H1 (cell line): ENCODE measurements at regions of chr12 and their contacts with region 1.

Region 1: GRCh38 chr12:219891-220352 is 6.0 kb upstream of the SLC6A12 start:
- DNase-seq: peak; percentile 72 to 98
- H3K4me3 ChIP-seq: peak overlapping the region in 2 of 4 experiments; percentile 14 to 40; a peak in 2 of 8 replicates
- H3K27ac ChIP-seq: no peak overlapping the region
- H3K4me1 ChIP-seq: peaks cover 0 to 11% (median 9%) of the 10 kb centered on the region in 4 experiments; a peak in 6 of 7 replicates
- H3K27me3 ChIP-seq: peaks cover 0 to under 1% (median 0%) of the 10 kb centered on the region in 4 experiments; a peak in 1 of 7 replicates
- CTCF ChIP-seq: peak in 2 of 3 experiments; percentile 99; a peak in 3 of 4 replicates
- EP300 ChIP-seq: no peak
- POLR2A ChIP-seq: no peak
- RAD21 ChIP-seq: peak; percentile 90 to 94

Region 2: GRCh38 chr12:117816-118345 is 102.0 kb before region 1 on chr12:
- CTCF ChIA-PET with region 1: interaction called, 34 read pairs
- POLR2A ChIA-PET with region 1: no interaction called
- DNase-seq: no peak
- H3K4me3 ChIP-seq: no peak overlapping the region
- H3K27ac ChIP-seq: no peak overlapping the region
- H3K4me1 ChIP-seq: no peaks in the 10 kb centered on the region; a peak in 1 of 7 replicates
- H3K27me3 ChIP-seq: no peaks in the 10 kb centered on the region
- CTCF ChIP-seq: no peak
- EP300 ChIP-seq: no peak
- POLR2A ChIP-seq: no peak
- RAD21 ChIP-seq: no peak

Region 3: GRCh38 chr12:164207-164606 is 55.7 kb before region 1 on chr12:
- CTCF ChIA-PET with region 1: interaction called, 55 read pairs
- POLR2A ChIA-PET with region 1: no interaction called
- DNase-seq: no peak
- H3K4me3 ChIP-seq: no peak overlapping the region
- H3K27ac ChIP-seq: no peak overlapping the region
- H3K4me1 ChIP-seq: peaks cover 3 to 11% (median 7%) of the 10 kb centered on the region in 4 experiments
- H3K27me3 ChIP-seq: peaks cover 0 to 3% (median 1%) of the 10 kb centered on the region in 4 experiments; a peak in 1 of 7 replicates
- CTCF ChIP-seq: no peak
- EP300 ChIP-seq: no peak
- POLR2A ChIP-seq: no peak
- RAD21 ChIP-seq: no peak

Region 4: GRCh38 chr12:188910-189621 is 30.9 kb before region 1 on chr12:
- CTCF ChIA-PET with region 1: interaction called, 52 read pairs
- POLR2A ChIA-PET with region 1: interaction called, 3 read pairs
- DNase-seq: peak in 1 of 2 experiments; percentile 87
- H3K4me3 ChIP-seq: peak overlapping the region; percentile 42 to 73 (median 58)
- H3K27ac ChIP-seq: no peak overlapping the region
- H3K4me1 ChIP-seq: peaks cover 0 to 3% (median 2%) of the 10 kb centered on the region in 4 experiments; a peak in 2 of 7 replicates
- H3K27me3 ChIP-seq: peaks cover 0 to 15% (median 5%) of the 10 kb centered on the region in 4 experiments; a peak in 5 of 7 replicates
- CTCF ChIP-seq: peak; percentile 83 to 86 (median 84)
- EP300 ChIP-seq: no peak
- POLR2A ChIP-seq: no peak
- RAD21 ChIP-seq: peak; percentile 41 to 70; a peak in 3 of 4 replicates

Region 5: DNA sequence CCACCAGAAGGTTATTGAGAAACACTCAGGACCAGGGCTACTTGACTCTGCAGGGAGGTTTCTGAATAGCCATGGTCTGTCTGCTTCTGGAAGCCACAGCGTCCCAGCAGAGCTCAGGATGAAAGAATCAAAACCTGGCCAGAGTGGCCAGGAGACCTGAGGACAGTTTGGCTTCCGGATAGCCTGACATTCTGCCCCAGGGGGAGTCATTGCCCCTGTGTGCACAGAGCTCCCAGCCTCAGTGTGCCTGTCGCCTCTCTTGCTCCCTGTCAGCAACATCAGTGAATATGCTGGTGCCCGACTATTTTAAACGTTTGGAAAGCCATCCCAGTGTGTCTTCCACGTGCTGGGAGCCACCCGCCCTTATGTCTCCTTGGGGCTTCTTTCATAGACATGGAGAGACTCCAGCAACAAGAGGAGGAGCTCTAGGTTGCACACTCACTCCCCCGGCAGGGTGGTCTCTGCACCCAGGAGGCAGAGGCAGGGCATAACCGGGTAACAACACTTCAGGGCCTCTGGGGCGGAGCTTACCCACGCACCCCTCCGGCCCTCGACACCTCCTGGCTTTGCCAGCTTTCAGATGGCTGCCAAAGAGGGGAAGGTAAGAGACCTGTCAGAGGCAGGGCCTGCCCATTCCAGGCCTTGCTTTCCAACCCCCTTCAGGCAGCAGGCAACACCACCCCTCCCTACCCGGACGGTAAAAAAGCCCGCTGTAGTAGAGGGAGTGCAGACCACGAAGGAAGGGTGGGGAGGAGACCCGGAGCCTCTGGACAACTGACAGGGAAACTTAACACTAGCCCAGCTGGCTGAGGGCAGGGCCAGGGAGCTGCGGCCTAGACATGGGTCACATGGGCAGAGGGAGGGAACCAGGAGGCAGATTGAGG is 13.1 kb after region 1 on chr12:
- CTCF ChIA-PET with region 1: interaction called, 101 read pairs
- POLR2A ChIA-PET with region 1: no interaction called
- DNase-seq: no peak
- H3K4me3 ChIP-seq: no peak overlapping the region
- H3K27ac ChIP-seq: no peak overlapping the region
- H3K4me1 ChIP-seq: peaks cover 0 to 14% (median 5%) of the 10 kb centered on the region in 4 experiments; a peak in 5 of 7 replicates
- H3K27me3 ChIP-seq: peaks cover 0 to 2% (median 0%) of the 10 kb centered on the region in 4 experiments; a peak in 2 of 7 replicates
- CTCF ChIP-seq: no peak
- EP300 ChIP-seq: no peak
- POLR2A ChIP-seq: no peak
- RAD21 ChIP-seq: no peak

Region 6: DNA sequence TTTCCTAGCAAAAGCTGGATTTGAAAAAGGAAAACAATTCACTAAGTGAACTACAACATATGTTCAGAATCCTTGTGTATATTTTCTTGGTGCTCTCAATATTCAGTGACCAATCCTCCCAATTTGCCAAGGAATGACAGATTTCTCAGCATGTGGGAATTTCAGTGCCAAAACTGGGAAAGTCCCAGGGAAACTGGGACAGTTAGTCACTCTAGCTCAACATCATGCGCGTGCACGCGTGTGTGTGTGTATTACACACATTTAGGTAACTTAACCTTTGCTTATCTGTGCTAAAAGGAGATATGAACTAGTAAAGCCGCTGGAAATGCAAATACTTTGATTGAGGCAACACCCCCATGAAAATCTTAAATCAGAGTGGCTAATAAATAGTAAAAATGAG is 68.8 kb after region 1 on chr12:
- CTCF ChIA-PET with region 1: no interaction called
- POLR2A ChIA-PET with region 1: no interaction called
- DNase-seq: no peak
- H3K4me3 ChIP-seq: no peak overlapping the region
- H3K27ac ChIP-seq: no peak overlapping the region
- H3K4me1 ChIP-seq: no peaks in the 10 kb centered on the region
- H3K27me3 ChIP-seq: no peaks in the 10 kb centered on the region
- CTCF ChIP-seq: no peak
- EP300 ChIP-seq: no peak
- POLR2A ChIP-seq: no peak
- RAD21 ChIP-seq: no peak

Region 7: GRCh38 chr12:356276-356988 is 136.5 kb after region 1 on chr12:
- CTCF ChIA-PET with region 1: no interaction called
- POLR2A ChIA-PET with region 1: no interaction called
- DNase-seq: no peak
- H3K4me3 ChIP-seq: no peak overlapping the region
- H3K27ac ChIP-seq: no peak overlapping the region
- H3K4me1 ChIP-seq: no peaks in the 10 kb centered on the region
- H3K27me3 ChIP-seq: no peaks in the 10 kb centered on the region
- CTCF ChIP-seq: no peak
- EP300 ChIP-seq: no peak
- POLR2A ChIP-seq: no peak
- RAD21 ChIP-seq: no peak